ENCODE measurements at regions of chr13 and their contacts with region 1.

Region 1: DNA sequence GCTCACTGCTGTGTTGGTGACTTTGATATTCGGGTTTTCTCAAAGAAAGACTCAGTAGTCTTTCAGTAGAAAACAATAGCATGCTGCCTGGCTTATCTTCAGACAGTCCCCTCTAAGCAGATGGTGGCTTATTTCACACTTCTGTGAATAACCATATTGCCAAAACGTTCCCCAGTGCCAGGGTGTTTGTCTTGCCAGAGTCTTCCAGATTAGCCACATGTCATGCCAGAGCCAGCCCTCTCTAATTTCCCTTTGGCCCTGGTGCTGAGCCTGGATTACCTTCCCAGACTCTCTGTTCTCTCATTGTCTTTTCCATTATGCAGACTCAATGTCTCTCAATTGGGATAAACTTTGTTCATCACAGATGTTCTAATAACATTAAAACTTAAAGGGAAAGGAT is 488.0 kb upstream of the ATXN8OS start:
- DNase-seq: no peak
- H3K4me3 ChIP-seq: no peak overlapping the region
- H3K27ac ChIP-seq: no peak overlapping the region
- H3K4me1 ChIP-seq: no peaks in the 10 kb centered on the region
- H3K27me3 ChIP-seq: no peaks in the 10 kb centered on the region
- CTCF ChIP-seq: no peak
- POLR2A ChIP-seq: no peak

Region 2: DNA sequence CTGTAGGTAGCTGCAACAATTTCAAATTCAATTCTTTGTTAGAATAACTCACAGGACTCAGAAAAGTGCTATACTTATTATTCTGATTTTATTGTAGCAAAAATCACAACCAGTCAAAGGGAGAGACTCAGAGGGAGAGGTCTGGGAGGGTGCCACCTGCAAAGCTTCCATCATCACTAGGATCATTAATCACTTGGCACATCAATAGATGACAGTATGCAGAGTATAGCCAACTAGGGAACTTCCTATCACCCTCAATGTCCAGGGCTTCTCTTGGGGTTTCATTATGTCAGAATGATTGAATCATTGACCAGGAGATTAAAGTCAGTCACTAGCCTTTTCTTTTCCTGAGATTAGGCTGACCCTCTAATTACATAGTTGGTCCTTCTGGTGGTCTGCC is 56.6 kb after region 1 on chr13:
- intact Hi-C with region 1: loop called (anchors 2 kb)
- DNase-seq: no peak
- H3K4me3 ChIP-seq: no peak overlapping the region
- H3K27ac ChIP-seq: no peak overlapping the region
- H3K4me1 ChIP-seq: no peaks in the 10 kb centered on the region
- H3K27me3 ChIP-seq: no peaks in the 10 kb centered on the region
- CTCF ChIP-seq: no peak
- POLR2A ChIP-seq: no peak

Measured in breast epithelium (tissue), 4 donors.